HepG2 (cell line): ENCODE measurements at regions of chr12 and their contacts with region 1.

Region 1: GRCh38 chr12:78562368-78563205 is 302.0 kb upstream of the SYT1 start:
- DNase-seq: peak; percentile 1
- ATAC-seq: peak; percentile 49; the same call in 1 of the 3 replicates
- H3K4me3 ChIP-seq: no peak overlapping the region
- H3K27ac ChIP-seq: no peak overlapping the region
- H3K4me1 ChIP-seq: no peaks in the 10 kb centered on the region
- H3K27me3 ChIP-seq: no peaks in the 10 kb centered on the region
- CTCF ChIP-seq: peak; percentile 19; the same call in 1 of the 2 replicates
- EP300 ChIP-seq: no peak
- POLR2A ChIP-seq: no peak
- RAD21 ChIP-seq: no peak

Region 2: GRCh38 chr12:79174626-79175025 is 612.0 kb after region 1 on chr12:
- CTCF ChIA-PET with region 1: no interaction called
- POLR2A ChIA-PET with region 1: no interaction called
- in situ Hi-C with region 1: no loop called
- intact Hi-C with region 1: loop called (anchors 5 kb)
- DNase-seq: peak; percentile 5
- ATAC-seq: peak; percentile 53; the same call in 1 of the 3 replicates
- H3K4me3 ChIP-seq: no peak overlapping the region
- H3K27ac ChIP-seq: no peak overlapping the region
- H3K4me1 ChIP-seq: no peaks in the 10 kb centered on the region
- H3K27me3 ChIP-seq: no peaks in the 10 kb centered on the region
- CTCF ChIP-seq: peak; percentile 23; the same call in 1 of the 2 replicates
- EP300 ChIP-seq: no peak
- POLR2A ChIP-seq: no peak
- RAD21 ChIP-seq: no peak